ENCODE measurements at regions of chr12 and their contacts with region 1.

Region 1: GRCh38 chr12:6965026-6965661 is 5.3 kb downstream of the PHB2 start:
- DNase-seq: no peak
- H3K4me3 ChIP-seq: no peak overlapping the region
- CTCF ChIP-seq: peak; percentile 93

Region 2: GRCh38 chr12:6851921-6852650 is 113.1 kb before region 1 on chr12 and contains the start of gene USP5:
- CTCF ChIA-PET with region 1: no interaction called
- POLR2A ChIA-PET with region 1: no interaction called
- DNase-seq: peak; percentile 97
- H3K4me3 ChIP-seq: peak within 1 kb of the TSS; percentile 98
- CTCF ChIP-seq: no peak

Region 3: GRCh38 chr12:6867413-6868210 is 97.5 kb before region 1 on chr12 and contains the start of gene TPI1:
- CTCF ChIA-PET with region 1: interaction called, 36 read pairs
- POLR2A ChIA-PET with region 1: no interaction called
- DNase-seq: no peak
- H3K4me3 ChIP-seq: peak within 1 kb of the TSS; percentile 96
- CTCF ChIP-seq: no peak

Region 4: DNA sequence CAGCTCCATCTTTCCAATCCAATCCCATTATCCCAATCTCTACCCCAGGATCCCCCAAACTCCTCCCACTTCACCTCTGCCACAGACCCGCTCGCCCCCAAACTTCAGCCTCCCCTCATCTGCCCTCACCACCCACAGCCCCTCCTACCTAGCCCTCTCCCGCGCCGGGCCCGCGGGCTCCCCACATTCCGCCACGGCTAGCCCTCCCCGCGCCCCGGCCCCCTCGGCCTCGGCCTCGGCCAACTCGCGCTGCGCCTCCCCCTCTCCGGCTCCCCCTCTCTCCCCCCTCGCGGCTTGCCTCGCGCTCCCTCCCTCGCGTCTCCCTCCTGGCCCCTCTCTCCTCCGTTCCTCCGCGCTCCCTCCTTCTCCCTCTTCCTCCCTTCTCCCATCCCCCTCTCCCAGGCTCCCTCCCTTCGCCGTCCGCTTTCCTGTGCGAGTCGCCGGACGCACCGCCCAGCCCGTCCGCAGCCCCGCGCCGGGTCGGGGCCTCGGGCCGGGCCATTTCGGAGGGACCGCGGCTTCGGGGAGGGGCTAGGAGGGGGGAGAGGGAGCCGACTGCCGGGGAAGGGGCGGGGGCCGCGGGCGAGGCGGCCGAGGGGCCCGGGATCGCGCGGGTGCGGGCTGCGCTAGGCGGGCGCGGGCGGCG is 37.6 kb before region 1 on chr12 and contains the start of gene ATN1:
- CTCF ChIA-PET with region 1: interaction called, 164 read pairs
- POLR2A ChIA-PET with region 1: interaction called, 3 read pairs
- DNase-seq: no peak
- H3K4me3 ChIP-seq: peak within 1 kb of the TSS; percentile 83
- CTCF ChIP-seq: no peak

Region 5: DNA sequence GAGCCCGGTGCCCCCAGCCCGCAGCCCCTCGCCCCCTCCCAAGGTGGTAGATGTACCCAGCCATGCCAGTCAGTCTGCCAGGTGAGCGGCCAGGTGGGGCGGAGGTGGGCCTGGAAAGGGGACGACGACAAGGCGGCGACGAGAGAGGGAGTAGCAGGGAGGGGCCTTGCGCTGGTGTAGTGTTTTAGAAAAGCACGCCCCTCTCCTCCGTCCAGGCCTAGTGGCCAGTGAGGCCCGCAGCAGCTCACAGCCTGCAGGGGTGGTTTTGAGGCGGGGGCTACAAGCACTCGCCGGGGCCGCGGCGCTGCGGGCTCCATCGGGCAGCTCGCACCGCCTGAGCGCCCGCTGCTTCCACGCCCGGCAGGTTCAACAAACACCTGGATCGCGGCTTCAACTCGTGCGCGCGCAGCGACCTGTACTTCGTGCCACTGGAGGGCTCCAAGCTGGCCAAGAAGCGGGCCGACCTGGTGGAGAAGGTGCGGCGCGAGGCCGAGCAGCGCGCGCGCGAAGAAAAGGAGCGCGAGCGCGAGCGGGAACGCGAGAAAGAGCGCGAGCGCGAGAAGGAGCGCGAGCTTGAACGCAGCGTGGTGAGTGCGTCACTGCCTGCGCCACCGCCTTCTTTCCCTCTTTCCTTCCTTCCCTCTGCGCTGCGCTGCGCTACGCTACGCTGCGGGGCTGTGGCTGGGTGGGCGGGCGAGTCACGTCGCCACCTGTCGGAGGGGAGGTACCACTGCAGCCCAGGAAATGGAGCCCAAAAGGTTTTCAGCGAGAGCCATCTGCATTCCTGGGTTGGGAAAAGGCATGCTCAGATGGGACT is 27.5 kb before region 1 on chr12:
- CTCF ChIA-PET with region 1: interaction called, 226 read pairs
- POLR2A ChIA-PET with region 1: interaction called, 4 read pairs
- DNase-seq: no peak
- H3K4me3 ChIP-seq: peak overlapping the region; percentile 63
- CTCF ChIP-seq: peak; percentile 96

Region 6: DNA sequence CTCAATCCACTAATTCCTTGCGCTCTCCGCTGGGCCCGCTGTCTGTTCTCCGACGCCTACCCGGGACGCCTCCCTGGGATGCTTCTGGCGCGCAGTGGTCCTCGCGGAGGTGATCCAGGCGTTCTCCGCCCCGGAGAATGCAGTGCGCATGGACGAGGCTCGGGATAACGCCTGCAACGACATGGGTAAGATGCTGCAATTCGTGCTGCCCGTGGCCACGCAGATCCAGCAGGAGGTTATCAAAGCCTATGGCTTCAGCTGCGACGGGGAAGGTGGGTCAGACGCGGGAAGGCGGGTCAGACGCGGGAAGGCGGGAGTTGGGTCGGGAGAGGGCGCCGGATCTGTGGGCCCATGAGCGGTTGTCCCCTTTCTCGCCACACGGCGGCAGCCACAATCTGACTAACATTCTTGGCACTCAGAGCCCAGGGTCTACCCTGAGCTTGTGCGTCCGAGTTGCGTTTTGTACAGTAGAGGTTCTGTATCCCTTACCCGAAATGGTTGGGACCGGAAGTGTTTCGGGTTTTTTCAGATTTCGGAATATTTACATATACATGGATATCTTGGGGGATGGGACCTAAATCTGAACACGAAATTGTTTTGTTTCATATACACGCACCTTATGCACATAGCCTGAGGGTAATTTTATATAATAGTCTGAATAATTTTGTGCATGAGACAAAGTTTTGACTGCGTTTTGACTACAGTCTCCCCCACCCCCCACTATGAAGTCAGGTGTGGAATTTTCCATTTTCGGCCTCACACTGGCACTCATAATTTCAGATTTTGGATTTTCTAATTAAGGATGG is 20.6 kb before region 1 on chr12:
- CTCF ChIA-PET with region 1: interaction called, 226 read pairs
- POLR2A ChIA-PET with region 1: interaction called, 8 read pairs
- DNase-seq: no peak
- H3K4me3 ChIP-seq: peak overlapping the region; percentile 66
- CTCF ChIP-seq: peak; percentile 89

Region 7: DNA sequence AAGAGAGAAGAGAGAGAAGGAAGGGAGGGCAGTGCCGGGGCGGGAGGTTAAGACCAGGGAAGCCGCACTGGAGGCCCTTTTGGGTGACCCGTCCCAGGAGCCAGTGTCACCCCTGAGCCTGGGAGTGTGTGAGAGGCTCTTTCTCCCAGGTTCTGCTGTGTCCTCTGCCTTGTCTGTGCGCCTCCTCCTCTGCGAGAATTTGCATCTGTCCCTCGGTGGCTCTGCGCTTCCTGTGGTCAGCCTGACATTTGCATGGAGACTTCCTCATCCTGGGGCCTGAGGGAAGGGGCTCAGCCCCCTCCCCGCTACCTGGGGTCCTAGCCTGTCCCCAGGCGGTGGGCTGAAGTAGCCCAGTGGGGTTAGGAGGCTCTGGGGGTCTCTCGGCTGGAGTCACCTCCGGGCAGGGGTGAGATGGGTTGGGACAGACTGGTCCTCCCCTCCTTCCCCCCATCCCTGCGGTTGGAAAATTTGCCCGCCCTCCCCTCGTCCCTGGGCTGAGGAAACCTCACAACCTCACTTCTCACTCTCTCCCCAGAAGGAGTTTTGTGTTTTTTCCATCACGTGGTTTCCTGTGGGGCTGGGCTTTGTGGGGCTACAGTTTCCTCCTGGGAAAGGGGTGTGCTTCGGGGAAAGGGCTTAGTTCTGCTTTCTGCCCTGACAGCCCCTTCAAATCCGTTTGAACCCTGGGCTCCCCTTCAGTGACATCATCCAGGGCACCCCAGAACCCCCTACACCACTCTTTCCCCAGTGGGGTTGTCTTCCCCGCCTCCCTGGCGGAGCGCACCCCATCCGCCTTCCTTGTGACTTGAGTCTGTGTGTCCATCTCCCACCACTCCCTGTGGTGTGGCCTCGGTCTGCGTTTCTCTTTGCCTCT is 11.5 kb before region 1 on chr12:
- CTCF ChIA-PET with region 1: interaction called, 226 read pairs
- POLR2A ChIA-PET with region 1: no interaction called
- DNase-seq: no peak
- H3K4me3 ChIP-seq: no peak overlapping the region
- CTCF ChIP-seq: no peak

Region 8: DNA sequence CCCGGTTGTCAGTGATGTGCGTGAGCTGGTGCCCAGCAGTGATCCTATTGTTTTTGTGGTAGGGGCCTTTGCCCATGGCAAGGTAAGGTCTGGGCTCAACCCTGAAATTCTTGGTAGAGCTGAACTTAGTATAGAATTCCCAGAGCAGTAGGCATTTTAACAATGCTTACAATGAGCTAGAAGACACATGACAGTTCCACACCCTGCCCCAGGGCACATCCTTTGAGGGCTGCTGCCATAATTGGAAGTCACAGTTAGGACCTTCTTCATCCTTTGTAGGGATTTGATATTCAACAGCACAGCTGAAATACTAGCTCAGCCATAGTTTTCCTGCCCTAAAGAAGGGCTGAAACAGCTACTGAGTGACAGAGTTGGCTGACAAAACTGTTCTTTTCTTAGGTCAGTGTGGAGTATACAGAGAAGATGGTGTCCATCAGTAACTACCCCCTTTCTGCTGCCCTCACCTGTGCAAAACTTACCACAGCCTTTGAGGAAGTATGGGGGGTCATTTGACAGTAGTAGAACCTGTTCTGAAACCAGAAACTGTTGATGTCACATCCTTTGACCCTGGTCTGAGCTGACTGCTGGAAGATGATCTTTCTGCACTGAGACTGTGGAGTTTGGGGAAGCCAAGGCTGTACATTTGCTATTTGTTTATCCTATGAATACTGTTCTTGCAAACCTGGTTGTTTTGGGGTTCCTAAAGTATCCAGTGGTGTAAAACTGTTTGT is 10.3 kb after region 1 on chr12:
- CTCF ChIA-PET with region 1: interaction called, 18 read pairs
- POLR2A ChIA-PET with region 1: no interaction called
- DNase-seq: no peak
- H3K4me3 ChIP-seq: no peak overlapping the region
- CTCF ChIP-seq: no peak

Region 9: GRCh38 chr12:7068240-7068993 is 103.3 kb after region 1 on chr12:
- CTCF ChIA-PET with region 1: no interaction called
- POLR2A ChIA-PET with region 1: no interaction called
- DNase-seq: no peak
- H3K4me3 ChIP-seq: no peak overlapping the region
- CTCF ChIP-seq: no peak

Measured in AG04449 (cell line).